HCT116 (cell line): ENCODE measurements at regions of chr1 and their contacts with region 1.

Region 1: GRCh38 chr1:145601593-145601992 is 6.2 kb upstream of the GPR89A start:
- DNase-seq: no peak
- ATAC-seq: no peak
- H3K4me3 ChIP-seq: no peak overlapping the region
- H3K27ac ChIP-seq: no peak overlapping the region
- H3K4me1 ChIP-seq: no peaks in the 10 kb centered on the region
- H3K27me3 ChIP-seq: no peaks in the 10 kb centered on the region
- CTCF ChIP-seq: no peak
- POLR2A ChIP-seq: no peak
- RAD21 ChIP-seq: no peak

Region 2: GRCh38 chr1:145545055-145545454 is 56.5 kb before region 1 on chr1:
- CTCF ChIA-PET with region 1: no interaction called
- POLR2A ChIA-PET with region 1: no interaction called
- RAD21 ChIA-PET with region 1: no interaction called
- intact Hi-C with region 1: no loop called
- DNase-seq: no peak
- ATAC-seq: no peak
- H3K4me3 ChIP-seq: no peak overlapping the region
- H3K27ac ChIP-seq: no peak overlapping the region
- H3K4me1 ChIP-seq: peaks cover under 1 to 15% of the 10 kb centered on the region in 2 experiments; a peak in 3 of 4 replicates
- H3K27me3 ChIP-seq: no peaks in the 10 kb centered on the region
- CTCF ChIP-seq: no peak
- POLR2A ChIP-seq: no peak
- RAD21 ChIP-seq: no peak

Region 3: DNA sequence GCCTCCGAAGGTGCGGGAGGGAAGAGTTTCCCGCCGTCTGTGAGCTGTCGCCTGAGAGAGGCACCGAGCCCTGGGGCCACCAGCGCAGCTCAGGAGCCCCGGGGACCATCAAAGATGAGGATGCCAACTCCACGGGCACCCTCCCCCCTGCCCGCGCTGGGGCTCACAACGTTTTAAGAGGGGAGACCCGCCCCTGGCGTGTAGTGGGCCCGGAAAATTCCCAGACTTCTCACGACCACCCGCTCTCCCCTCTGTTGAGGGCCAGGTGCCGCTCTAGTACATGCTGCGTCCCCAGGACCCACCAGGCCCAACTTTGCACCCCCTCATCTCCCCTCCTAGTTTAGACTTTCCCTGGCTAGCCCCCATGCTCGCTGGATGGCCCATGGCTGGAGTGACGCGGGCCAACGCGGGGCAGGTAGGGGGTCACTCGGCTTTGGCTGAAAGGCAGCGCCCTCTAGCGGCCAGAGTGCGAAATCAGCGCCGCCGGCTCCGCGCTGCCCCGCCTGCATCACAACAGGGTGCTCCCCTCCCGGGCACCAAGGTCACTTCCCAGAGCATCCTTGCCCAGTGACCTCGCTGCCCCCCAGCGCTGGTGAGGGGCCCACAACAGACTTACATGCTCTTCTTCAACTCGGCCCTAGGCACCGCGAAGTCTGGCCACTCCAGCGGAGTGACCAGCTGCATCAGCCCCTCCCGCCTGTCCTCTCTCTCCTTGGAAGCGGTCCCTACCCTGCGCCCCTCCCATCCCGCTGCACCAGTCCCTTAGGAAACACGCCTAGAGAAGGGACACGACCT is 119.5 kb after region 1 on chr1:
- CTCF ChIA-PET with region 1: no interaction called
- POLR2A ChIA-PET with region 1: no interaction called
- RAD21 ChIA-PET with region 1: no interaction called
- intact Hi-C with region 1: loop called (anchors 10 kb)
- DNase-seq: peak; percentile 35
- ATAC-seq: peak; percentile 97
- H3K4me3 ChIP-seq: peak overlapping the region; percentile 36 to 55
- H3K27ac ChIP-seq: no peak overlapping the region
- H3K4me1 ChIP-seq: peaks cover 8 to 19% of the 10 kb centered on the region in 2 experiments
- H3K27me3 ChIP-seq: no peaks in the 10 kb centered on the region
- CTCF ChIP-seq: peak; percentile 63 to 90 (median 84)
- POLR2A ChIP-seq: no peak
- RAD21 ChIP-seq: peak; percentile 85